Caco-2 (cell line): ENCODE measurements at regions of chr5 and their contacts with region 1.

Region 1: DNA sequence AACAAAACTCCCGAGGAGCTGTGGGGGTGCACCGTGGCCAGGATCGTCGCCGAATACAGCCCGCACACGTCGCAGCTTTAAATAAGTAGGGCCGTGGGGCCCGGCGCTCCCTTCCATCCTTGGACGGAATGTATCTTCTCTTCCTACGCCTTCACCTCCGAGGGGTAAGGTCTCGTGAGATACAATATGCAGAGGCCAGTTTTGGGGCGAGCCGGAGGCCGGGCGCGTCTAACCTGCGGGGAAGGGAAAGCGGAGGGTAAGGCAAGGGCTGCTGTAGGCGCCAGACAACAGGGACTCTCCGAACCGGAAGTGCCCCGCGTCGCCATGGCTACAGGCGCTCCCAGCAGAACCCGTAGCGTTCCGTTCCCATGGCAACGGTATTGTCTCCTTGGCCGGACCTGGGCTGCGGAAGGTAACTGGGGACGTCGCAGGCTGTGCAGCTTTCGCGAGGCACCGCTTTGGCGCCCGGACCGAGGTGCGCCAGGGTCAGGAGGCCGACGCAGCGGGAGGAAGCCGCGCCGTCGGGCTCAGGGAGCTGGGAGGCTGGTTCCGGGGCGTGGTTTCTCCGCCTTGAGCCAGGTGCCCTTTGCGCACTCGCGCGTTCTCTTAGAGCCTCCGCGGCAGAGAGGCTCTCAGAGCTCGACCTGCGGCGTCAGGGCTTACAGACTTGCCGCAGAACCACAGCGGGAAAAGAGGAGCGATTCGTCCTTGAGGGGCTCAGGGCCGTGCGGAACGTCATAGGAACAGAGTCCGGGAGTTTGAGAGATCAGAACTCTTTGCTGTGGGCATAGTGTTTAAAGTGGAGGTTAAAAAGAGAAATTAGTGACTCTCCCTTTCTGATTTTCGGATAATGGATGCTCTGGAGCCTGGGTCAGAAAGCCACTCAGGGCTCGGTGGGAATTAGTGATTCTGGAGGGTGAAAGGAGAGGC is at the start of gene TTC23L:
- DNase-seq: peak; percentile 92 to 93
- H3K4me3 ChIP-seq: peak within 1 kb of the TSS; percentile 72
- H3K4me3 Mint-ChIP-seq: peak within 1 kb of the TSS; percentile 86
- H3K27ac Mint-ChIP-seq: peak within 1 kb of the TSS; percentile 96
- H3K4me1 ChIP-seq: peaks cover 6% of the 10 kb centered on the region; the same call in 1 of the 2 replicates
- H3K4me1 Mint-ChIP-seq: peaks cover 13% of the 10 kb centered on the region
- H3K27me3 ChIP-seq: no peaks in the 10 kb centered on the region
- H3K27me3 Mint-ChIP-seq: no peaks in the 10 kb centered on the region
- CTCF ChIP-seq: no peak
- total RNA-seq, gene TTC23L: 0.09 and 0.72 TPM in 2 replicates

Region 2: DNA sequence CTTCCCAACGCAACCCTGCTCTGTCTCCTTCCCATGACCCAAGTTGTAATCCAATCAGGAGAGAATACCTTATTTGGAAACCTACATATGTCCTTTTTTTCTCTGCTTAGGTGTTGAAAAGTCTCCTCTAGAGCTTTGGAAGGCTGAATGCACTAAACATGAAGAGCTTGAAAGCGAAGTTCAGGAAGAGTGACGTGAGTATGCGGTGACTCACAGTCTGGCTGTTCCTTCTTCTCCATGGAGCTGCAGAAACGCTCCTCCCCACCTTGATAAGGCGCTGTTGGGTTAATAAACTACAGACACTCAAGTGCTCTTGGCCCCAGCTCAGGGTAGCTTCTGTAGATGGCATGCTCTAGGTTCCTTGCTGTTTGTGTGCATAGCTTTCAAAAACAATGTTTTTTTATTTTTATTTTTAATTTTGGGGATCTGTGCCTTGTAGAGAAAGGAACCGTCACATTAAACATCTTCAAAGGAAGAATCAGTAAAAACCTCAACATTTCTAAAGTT is 152.2 kb before region 1 on chr5:
- CTCF ChIA-PET with region 1: no interaction called
- POLR2A ChIA-PET with region 1: no interaction called
- intact Hi-C with region 1: loop called (anchors 5 kb)
- DNase-seq: peak; percentile 85 to 90
- H3K4me3 ChIP-seq: no peak overlapping the region
- H3K4me3 Mint-ChIP-seq: peak overlapping the region; percentile 67
- H3K27ac Mint-ChIP-seq: peak overlapping the region; percentile 88
- H3K4me1 ChIP-seq: peaks cover 53% of the 10 kb centered on the region
- H3K4me1 Mint-ChIP-seq: peaks cover 43% of the 10 kb centered on the region
- H3K27me3 ChIP-seq: no peaks in the 10 kb centered on the region
- H3K27me3 Mint-ChIP-seq: no peaks in the 10 kb centered on the region
- CTCF ChIP-seq: no peak

Region 3: DNA sequence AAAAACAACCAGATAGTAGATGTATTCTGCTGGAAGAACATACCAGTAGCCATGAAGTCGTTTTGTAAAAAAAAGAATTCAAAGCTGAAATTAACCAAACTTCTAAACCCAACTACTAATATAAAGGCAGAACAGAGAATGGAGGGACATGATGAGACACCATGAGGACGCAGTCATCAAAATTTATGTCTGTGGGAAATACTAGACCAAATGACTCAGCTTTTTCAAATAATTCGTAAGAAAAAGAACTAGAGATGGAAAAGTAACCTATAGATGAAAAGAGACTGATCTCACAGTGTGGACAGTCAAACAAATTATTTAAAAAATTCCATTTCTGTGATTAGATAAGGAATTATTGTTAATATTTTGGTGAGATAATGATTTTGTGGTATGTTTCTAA is 10.2 kb after region 1 on chr5:
- CTCF ChIA-PET with region 1: interaction called, 3 read pairs
- POLR2A ChIA-PET with region 1: interaction called, 14 read pairs
- intact Hi-C with region 1: loop called (anchors 1 kb)
- DNase-seq: no peak
- H3K4me3 ChIP-seq: no peak overlapping the region
- H3K4me3 Mint-ChIP-seq: no peak overlapping the region
- H3K27ac Mint-ChIP-seq: no peak overlapping the region
- H3K4me1 ChIP-seq: peaks cover 33% of the 10 kb centered on the region
- H3K4me1 Mint-ChIP-seq: peaks cover 19% of the 10 kb centered on the region
- H3K27me3 ChIP-seq: no peaks in the 10 kb centered on the region
- H3K27me3 Mint-ChIP-seq: no peaks in the 10 kb centered on the region
- CTCF ChIP-seq: no peak

Region 4: GRCh38 chr5:34898258-34898895 is 59.3 kb after region 1 on chr5:
- CTCF ChIA-PET with region 1: no interaction called
- POLR2A ChIA-PET with region 1: interaction called, 3 read pairs
- intact Hi-C with region 1: loop called (anchors 1 kb)
- DNase-seq: peak; percentile 68 to 75
- H3K4me3 ChIP-seq: no peak overlapping the region
- H3K4me3 Mint-ChIP-seq: no peak overlapping the region
- H3K27ac Mint-ChIP-seq: peak overlapping the region; percentile 45
- H3K4me1 ChIP-seq: peaks cover 15% of the 10 kb centered on the region; the same call in 1 of the 2 replicates
- H3K4me1 Mint-ChIP-seq: no peaks in the 10 kb centered on the region
- H3K27me3 ChIP-seq: no peaks in the 10 kb centered on the region
- H3K27me3 Mint-ChIP-seq: no peaks in the 10 kb centered on the region
- CTCF ChIP-seq: peak; percentile 85 to 93